ENCODE measurements at regions of chr20 and their contacts with region 1.

Region 1: DNA sequence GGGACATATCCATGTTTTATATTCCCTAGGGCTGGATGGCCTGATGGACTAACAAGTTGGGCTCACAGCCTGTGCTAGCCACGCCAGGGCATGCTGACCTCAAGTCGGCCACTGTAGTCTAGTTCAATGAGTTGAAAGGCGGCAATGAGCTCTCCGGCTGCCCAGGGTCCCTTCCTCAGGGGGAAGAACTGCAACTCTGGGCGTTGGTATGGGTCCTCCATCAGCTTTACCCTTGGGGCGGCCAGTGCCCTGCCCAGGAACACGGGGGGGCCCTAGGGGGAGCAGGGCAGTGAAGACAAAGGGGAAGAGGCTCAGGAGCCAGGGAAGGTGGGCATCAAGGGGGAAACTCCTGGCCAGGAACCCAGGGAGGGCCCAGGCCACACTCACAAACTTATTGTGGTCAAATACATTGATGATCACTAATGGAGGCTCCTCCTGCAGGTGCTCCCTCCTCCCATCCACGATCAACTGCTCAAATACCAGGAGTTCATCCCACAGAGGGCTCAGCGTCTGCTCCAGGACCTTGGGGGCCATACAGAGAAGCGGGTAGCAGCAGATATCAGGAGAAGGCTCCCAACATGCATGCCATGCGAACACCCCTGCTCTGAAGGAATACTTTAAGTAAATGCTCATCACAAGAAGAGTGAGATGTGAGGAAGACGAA is 32.8 kb upstream of the SPAG4 start:
- DNase-seq: no peak
- H3K4me3 ChIP-seq: no peak overlapping the region
- H3K27ac ChIP-seq: no peak overlapping the region
- H3K4me1 ChIP-seq: no peaks in the 10 kb centered on the region
- H3K27me3 ChIP-seq: no peaks in the 10 kb centered on the region
- CTCF ChIP-seq: no peak
- POLR2A ChIP-seq: no peak

Region 2: DNA sequence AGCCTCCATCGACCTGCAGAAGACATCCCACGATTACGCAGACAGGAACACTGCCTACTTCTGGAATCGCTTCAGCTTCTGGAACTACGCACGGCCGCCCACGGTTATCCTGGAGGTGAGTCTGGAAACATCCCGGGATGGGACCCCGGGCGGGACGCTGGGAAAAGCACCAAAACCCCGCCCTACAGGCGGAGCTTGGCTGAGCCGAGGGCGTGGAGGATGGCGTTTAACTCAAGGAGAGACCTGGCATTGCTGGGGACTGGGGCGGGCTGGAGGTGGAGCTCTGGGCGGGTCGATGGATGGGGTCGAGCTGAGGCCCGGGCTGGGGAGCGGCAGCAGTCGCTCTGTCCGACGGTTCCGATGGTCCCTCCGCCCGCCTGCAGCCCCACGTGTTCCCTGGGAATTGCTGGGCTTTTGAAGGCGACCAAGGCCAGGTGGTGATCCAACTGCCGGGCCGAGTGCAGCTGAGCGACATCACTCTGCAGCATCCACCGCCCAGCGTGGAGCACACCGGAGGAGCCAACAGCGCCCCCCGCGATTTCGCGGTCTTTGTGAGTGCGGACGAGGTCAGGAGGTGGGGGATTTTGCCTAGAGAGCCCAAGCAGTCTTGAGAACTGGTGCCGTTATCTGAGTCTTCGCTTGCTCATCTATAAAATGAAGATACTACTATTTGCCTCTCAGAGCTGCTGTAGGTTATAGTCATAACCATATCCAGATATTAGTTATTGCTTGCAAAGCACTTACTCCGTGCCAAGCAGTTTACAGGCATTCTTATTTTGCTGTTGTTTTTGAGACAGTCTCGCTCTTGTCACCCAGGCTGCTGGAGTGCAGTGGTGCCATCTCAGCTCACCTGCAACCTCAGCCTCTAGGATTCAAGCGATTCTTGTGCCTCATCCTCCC is 36.6 kb after region 1 on chr20:
- intact Hi-C with region 1: loop called (anchors 1 kb)
- DNase-seq: peak; percentile 64 to 71
- H3K4me3 ChIP-seq: peak overlapping the region; percentile 27 to 69 (median 54)
- H3K27ac ChIP-seq: peak overlapping the region; percentile 26 to 90
- H3K4me1 ChIP-seq: peaks cover 7 to 8% of the 10 kb centered on the region in 2 donors
- H3K27me3 ChIP-seq: no peaks in the 10 kb centered on the region
- CTCF ChIP-seq: peak in 1 of 3 donors; percentile 11
- POLR2A ChIP-seq: no peak

Measured in breast epithelium (tissue), 4 donors.